ENCODE measurements at regions of chr2 and their contacts with region 1.

Region 1: DNA sequence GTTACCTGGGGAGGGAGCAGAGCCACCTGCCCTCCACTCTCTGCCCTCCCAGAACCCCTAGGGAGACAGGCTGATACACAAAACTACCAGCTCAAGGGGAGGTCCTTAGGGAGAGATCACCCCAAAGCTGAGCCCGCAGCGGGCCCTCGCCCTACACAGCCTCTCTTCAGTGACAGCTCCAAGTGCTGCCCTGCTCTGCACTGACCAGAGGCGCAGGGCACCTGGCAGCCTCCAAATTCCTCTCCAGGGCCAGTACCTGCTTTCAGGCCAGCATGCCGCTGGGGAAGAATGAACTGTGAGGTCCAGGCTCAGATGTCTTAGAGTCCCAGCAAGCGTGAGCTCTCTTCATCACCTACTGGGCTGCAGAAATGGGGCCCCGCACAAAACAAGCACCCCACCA is 11.3 kb upstream of the SH3BP4 start:
- DNase-seq: no peak
- H3K4me3 ChIP-seq: no peak overlapping the region
- H3K27ac ChIP-seq: no peak overlapping the region
- H3K4me1 ChIP-seq: no peaks in the 10 kb centered on the region
- H3K27me3 ChIP-seq: no peaks in the 10 kb centered on the region
- CTCF ChIP-seq: no peak

Region 2: GRCh38 chr2:234802845-234803171 is 137.7 kb before region 1 on chr2:
- CTCF ChIA-PET with region 1: no interaction called
- POLR2A ChIA-PET with region 1: interaction called, 15 read pairs
- intact Hi-C with region 1: no loop called
- DNase-seq: no peak
- H3K4me3 ChIP-seq: no peak overlapping the region
- H3K27ac ChIP-seq: no peak overlapping the region
- H3K4me1 ChIP-seq: no peaks in the 10 kb centered on the region
- H3K27me3 ChIP-seq: no peaks in the 10 kb centered on the region
- CTCF ChIP-seq: no peak